ENCODE measurements at regions of chr10 and their contacts with region 1.

Region 1: GRCh38 chr10:124152916-124153826 is 59.8 kb upstream of the CHST15 start:
- DNase-seq: peak; percentile 53 to 54
- ATAC-seq: peak; percentile 66 to 78
- H3K4me3 ChIP-seq: peak overlapping the region in 1 of 4 donors; percentile 16
- H3K27ac ChIP-seq: peak overlapping the region; percentile 73 to 82 (median 74)
- H3K4me1 ChIP-seq: peaks cover 47 to 55% of the 10 kb centered on the region in 2 donors
- H3K27me3 ChIP-seq: no peaks in the 10 kb centered on the region
- CTCF ChIP-seq: no peak
- POLR2A ChIP-seq: no peak

Region 2: DNA sequence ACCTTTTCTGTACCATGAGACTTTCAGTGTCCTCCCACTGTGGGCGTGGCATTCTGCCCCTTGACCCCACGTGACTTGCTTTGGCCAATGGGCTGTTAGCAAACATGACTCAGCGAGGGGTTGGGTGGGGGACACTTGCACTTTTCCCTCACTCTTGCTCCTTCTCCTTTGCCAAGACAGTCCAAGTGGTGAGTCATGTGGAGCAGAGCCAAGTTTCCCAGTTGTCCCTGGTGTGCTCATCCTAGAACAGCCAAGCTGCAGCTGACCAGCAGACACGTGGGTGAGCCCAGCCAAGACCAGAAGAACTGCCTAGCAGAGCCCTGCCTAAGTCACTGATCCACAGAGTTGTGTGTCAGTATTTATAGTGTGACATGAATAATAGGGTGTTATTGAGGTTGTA is 178.8 kb before region 1 on chr10:
- in situ Hi-C with region 1: no loop called
- intact Hi-C with region 1: no loop called
- DNase-seq: no peak
- ATAC-seq: no peak
- H3K4me3 ChIP-seq: no peak overlapping the region
- H3K27ac ChIP-seq: no peak overlapping the region
- H3K4me1 ChIP-seq: no peaks in the 10 kb centered on the region
- H3K27me3 ChIP-seq: peaks cover 41 to 43% (median 43%) of the 10 kb centered on the region in 3 donors
- CTCF ChIP-seq: no peak
- POLR2A ChIP-seq: no peak

Region 3: DNA sequence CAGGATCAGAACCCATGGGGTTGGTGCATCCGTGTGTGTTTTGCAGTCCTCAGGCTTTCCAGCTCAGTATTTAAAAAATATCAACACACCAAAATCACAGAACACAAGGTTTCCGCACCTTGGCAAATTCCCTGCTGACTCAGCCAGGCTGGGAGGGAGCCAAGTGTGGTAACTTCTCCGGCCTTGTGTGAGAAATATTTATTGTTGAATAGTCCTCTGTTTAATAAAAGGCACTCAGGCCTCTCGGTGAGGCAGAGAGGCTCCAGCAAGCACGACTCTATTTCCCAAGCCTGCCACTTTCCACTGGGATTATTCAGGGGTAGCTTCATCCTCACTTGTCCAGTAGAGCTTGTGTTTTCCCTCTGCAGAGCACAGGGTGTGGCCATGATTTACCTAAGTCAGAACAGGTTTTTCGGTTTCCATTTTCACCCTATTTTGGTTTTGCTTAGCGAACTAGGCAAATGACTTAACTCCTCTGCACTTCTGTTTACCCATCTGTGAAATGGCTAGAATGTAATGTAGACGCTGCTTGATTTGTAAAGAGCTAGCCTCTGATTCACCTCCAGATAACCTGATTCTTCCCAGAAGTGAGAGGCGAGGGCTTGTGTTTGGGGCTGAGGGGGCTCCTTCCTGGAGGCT is 46.8 kb before region 1 on chr10:
- in situ Hi-C with region 1: loop called in 1 of 4 experiments (anchors 10 kb)
- intact Hi-C with region 1: no loop called
- DNase-seq: peak in 1 of 2 donors; percentile 37
- ATAC-seq: peak; percentile 52 to 68
- H3K4me3 ChIP-seq: no peak overlapping the region
- H3K27ac ChIP-seq: peak overlapping the region; percentile 31 to 73 (median 54)
- H3K4me1 ChIP-seq: peaks cover 10 to 15% of the 10 kb centered on the region in 2 donors
- H3K27me3 ChIP-seq: no peaks in the 10 kb centered on the region
- CTCF ChIP-seq: no peak
- POLR2A ChIP-seq: no peak

Region 4: GRCh38 chr10:124378881-124379471 is 225.8 kb after region 1 on chr10:
- in situ Hi-C with region 1: no loop called
- intact Hi-C with region 1: no loop called
- DNase-seq: no peak
- ATAC-seq: no peak
- H3K4me3 ChIP-seq: no peak overlapping the region
- H3K27ac ChIP-seq: no peak overlapping the region
- H3K4me1 ChIP-seq: no peaks in the 10 kb centered on the region
- H3K27me3 ChIP-seq: peaks cover 0 to 5% (median 0%) of the 10 kb centered on the region in 3 donors
- CTCF ChIP-seq: no peak
- POLR2A ChIP-seq: no peak